ENCODE measurements at regions of chr7 and their contacts with region 1.

Region 1: GRCh38 chr7:106947244-106947728 is 82.2 kb downstream of the PIK3CG start:
- DNase-seq: peak in 3 of 10 donors; percentile 39 to 63 (median 44)
- H3K4me3 ChIP-seq: no peak overlapping the region
- H3K27ac ChIP-seq: no peak overlapping the region
- H3K27me3 ChIP-seq: no peaks in the 10 kb centered on the region
- CTCF ChIP-seq: peak; percentile 26 to 79 (median 66)

Region 2: DNA sequence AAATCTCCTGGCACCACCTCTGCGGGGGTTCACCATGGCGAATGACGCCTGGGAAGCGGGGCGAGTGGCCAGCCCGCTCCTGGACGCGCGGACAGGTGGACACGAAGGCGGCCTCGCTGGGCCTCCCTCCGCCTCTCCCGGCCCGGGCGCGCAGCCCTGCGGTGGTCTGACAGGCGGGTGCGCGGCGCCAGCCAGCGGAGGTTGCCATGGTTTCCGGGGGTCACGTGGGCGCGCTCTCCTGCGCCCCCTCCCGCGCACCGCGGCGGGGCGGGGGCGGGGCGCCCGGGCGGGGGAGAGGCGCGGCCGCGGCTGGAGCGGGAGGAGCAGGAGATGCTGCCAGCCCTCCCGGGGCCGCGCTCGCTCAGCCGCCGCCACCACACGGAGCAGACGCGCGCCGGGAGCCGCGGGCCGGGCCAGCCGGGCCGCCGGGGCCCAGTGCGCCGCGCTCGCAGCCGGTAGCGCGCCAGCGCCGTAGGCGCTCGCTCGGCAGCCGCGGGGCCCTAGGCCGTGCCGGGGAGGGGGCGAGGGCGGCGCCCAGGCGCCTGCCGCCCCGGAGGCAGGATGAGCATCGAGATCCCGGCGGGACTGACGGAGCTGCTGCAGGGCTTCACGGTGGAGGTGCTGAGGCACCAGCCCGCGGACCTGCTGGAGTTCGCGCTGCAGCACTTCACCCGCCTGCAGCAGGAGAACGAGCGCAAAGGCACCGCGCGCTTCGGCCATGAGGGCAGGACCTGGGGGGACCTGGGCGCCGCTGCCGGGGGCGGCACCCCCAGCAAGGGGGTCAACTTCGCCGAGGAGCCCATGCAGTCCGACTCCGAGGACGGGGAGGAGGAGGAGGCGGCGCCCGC is 97.3 kb after region 1 on chr7 and contains the start of gene PRKAR2B:
- intact Hi-C with region 1: loop called in 1 of 2 experiments (anchors 10 kb)
- DNase-seq: peak; percentile 68 to 92 (median 82)
- H3K4me3 ChIP-seq: peak within 1 kb of the TSS; percentile 71 to 97 (median 89)
- H3K27ac ChIP-seq: peak within 1 kb of the TSS; percentile 59 to 97 (median 91)
- H3K27me3 ChIP-seq: no peaks in the 10 kb centered on the region
- CTCF ChIP-seq: peak in 23 of 56 donors; percentile 7 to 49 (median 24)
- total RNA-seq, gene PRKAR2B: 24.3 to 101 (median 69.4) TPM

Region 3: GRCh38 chr7:107160389-107160788 is 213.1 kb after region 1 on chr7:
- intact Hi-C with region 1: no loop called
- DNase-seq: no peak
- H3K4me3 ChIP-seq: no peak overlapping the region
- H3K27ac ChIP-seq: peak overlapping the region in 1 of 59 donors; percentile 27
- H3K27me3 ChIP-seq: no peaks in the 10 kb centered on the region
- CTCF ChIP-seq: no peak

Measured in dorsolateral prefrontal cortex (tissue), 120 donors.